Endothelial cell of umbilical vein (primary cell): ENCODE measurements at regions of chr13 and their contacts with region 1.

Region 1: DNA sequence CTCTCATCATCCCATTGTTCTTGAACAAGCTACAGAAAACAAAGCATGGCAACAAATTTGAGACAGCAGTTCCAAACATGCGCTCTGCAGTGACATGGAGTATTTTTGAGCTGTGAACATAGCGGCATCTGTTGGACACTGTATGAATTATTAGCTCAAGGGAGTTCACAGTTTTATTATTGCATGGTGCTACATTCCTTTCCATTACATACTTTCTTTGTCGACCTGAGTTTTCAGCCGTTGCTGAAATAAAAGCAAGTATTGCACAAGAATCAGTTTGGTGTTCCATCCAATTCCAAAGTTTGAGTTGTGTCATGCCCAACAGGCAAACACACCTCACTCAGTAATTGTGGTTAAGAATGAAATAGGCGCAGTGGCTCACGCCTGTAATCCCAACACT is 30.1 kb upstream of the METTL21C start:
- DNase-seq: peak; percentile 76
- H3K4me3 ChIP-seq: no peak overlapping the region
- H3K27ac ChIP-seq: no peak overlapping the region
- H3K4me1 ChIP-seq: peaks cover 14% of the 10 kb centered on the region
- H3K27me3 ChIP-seq: no peaks in the 10 kb centered on the region
- CTCF ChIP-seq: peak; percentile 42
- POLR2A ChIP-seq: no peak

Region 2: DNA sequence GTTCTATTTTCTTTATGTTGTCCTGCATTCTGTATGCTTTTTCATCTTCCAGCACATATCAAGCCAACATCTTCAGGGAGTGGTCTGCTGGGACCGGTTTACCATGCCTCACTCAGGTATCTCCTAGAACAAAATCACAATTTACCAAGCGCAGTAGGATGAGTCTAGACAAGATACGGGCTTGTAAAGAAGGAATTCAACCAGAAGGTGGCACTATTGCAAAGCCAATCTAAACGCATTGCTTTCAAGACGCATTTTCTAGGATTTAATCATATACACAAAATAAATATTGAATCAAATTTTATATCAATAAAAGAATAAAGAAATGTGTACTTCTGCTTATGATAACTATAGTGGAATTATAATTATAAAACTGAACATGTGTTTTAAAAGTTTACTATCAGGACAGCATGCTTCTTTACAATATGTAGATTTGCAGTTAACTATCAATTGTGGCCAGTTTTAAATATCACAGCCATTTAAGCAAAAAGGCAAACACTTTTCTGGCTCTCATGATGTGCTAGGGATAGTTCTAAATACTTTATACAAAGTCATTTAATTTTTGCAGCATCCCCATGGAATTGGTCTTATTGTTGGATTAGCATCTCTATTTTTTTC is 144.3 kb before region 1 on chr13:
- CTCF ChIA-PET with region 1: interaction called, 64 read pairs
- POLR2A ChIA-PET with region 1: no interaction called
- dilution Hi-C with region 1: no loop called
- intact Hi-C with region 1: loop called (anchors 1 kb)
- DNase-seq: peak; percentile 74
- H3K4me3 ChIP-seq: no peak overlapping the region
- H3K27ac ChIP-seq: no peak overlapping the region
- H3K4me1 ChIP-seq: no peaks in the 10 kb centered on the region
- H3K27me3 ChIP-seq: peaks cover 20 to 22% of the 10 kb centered on the region in 2 experiments
- CTCF ChIP-seq: peak; percentile 49
- POLR2A ChIP-seq: no peak

Region 3: GRCh38 chr13:102642475-102642874 is 82.4 kb before region 1 on chr13:
- CTCF ChIA-PET with region 1: interaction called, 36 read pairs
- POLR2A ChIA-PET with region 1: no interaction called
- dilution Hi-C with region 1: no loop called
- intact Hi-C with region 1: loop called (anchors 5 kb)
- DNase-seq: no peak
- H3K4me3 ChIP-seq: no peak overlapping the region
- H3K27ac ChIP-seq: no peak overlapping the region
- H3K4me1 ChIP-seq: peaks cover 16% of the 10 kb centered on the region
- H3K27me3 ChIP-seq: no peaks in the 10 kb centered on the region
- CTCF ChIP-seq: no peak
- POLR2A ChIP-seq: no peak

Region 4: DNA sequence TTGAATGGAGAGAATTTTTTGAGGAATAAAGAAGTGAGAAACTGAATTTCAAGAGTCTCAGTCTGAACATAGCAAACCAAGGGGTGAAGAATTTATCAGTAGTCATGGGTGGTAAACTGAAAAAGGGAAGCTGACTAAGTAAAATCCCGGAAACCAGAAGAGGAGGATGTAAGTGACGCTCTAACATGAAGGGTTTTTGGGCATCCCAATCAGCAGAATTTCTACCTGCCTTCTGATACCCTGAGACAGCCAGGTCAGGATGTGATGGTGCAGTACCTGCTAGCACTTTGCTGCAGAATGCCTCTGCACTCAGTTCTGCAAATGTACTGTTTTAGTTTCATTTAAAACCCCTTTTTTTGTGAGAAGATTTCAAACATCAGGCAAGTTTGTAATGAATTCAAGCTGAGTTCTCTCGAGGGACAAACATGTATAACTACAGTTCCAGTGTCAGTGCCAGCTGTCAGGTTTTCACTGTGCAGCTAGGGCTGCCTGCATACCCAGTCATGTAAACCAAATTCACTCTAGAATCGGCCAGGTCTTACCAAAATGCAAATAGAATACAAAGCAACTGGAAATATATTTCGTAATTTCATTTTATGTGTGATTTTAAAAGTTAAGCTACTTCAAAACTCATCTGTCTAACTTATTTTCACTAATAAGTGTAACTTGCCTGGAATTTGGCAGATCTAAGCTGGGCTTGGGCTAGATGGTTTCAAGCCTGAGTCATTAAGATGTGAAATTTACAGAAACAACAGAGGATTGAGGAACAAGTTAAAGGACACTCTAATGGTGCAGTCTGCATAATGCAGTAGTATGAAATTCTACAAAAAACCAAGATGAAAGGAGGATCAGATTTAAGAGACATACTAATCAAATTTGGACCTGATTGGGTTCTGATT is 43.8 kb before region 1 on chr13:
- CTCF ChIA-PET with region 1: interaction called, 25 read pairs
- POLR2A ChIA-PET with region 1: no interaction called
- dilution Hi-C with region 1: no loop called
- intact Hi-C with region 1: no loop called
- DNase-seq: no peak
- H3K4me3 ChIP-seq: no peak overlapping the region
- H3K27ac ChIP-seq: no peak overlapping the region
- H3K4me1 ChIP-seq: no peaks in the 10 kb centered on the region
- H3K27me3 ChIP-seq: no peaks in the 10 kb centered on the region
- CTCF ChIP-seq: no peak
- POLR2A ChIP-seq: no peak

Region 5: GRCh38 chr13:102693781-102694180 is 31.1 kb before region 1 on chr13:
- CTCF ChIA-PET with region 1: interaction called, 13 read pairs
- POLR2A ChIA-PET with region 1: no interaction called
- dilution Hi-C with region 1: no loop called
- intact Hi-C with region 1: no loop called
- DNase-seq: peak; percentile 25
- H3K4me3 ChIP-seq: no peak overlapping the region
- H3K27ac ChIP-seq: no peak overlapping the region
- H3K4me1 ChIP-seq: no peaks in the 10 kb centered on the region
- H3K27me3 ChIP-seq: peaks cover 7 to 9% of the 10 kb centered on the region in 2 experiments
- CTCF ChIP-seq: no peak
- POLR2A ChIP-seq: no peak

Region 6: DNA sequence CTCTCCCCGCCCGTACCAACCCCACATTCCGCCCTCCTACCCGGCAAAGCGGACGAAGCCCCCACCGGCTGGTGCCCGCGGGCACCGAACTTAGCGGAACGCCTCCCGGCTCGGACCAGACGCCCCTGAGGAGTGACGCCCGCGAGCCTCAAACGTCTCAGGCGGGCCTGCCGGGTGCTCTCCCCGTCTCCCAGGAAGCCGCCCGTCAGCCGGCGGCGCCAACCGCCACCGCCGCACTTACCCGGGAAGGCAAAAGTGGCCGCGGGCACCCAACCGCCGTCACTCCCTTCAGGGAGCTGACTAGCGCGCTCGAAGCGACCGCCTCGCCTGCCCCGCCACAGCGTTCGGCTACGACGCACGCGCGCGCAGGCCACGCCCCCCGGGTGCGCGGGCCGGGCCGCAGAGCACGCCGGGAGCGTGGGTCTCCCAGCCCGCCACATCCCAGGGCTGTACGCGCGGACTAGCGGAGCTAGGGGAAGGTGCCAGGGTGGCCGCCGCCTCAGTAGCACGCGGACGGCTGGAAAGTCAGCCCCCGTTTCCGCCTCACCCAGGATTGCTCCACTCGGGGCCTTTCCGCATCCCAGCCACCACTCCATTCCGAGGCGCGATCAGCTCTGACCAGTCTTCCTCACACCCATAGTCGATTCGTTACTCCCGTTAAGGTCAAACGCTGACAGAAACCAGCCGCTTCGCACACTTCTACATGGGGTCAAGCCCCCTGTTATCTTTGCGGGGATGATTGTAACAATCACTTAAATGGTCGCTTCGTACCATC is 48.7 kb after region 1 on chr13 and contains the start of gene TEX30:
- CTCF ChIA-PET with region 1: interaction called, 12 read pairs
- POLR2A ChIA-PET with region 1: no interaction called
- dilution Hi-C with region 1: no loop called
- intact Hi-C with region 1: loop called (anchors 1 kb)
- DNase-seq: peak; percentile 90
- H3K4me3 ChIP-seq: peak within 1 kb of the TSS; percentile 85 to 94 (median 88)
- H3K27ac ChIP-seq: peak within 1 kb of the TSS; percentile 76
- H3K4me1 ChIP-seq: peaks cover 18% of the 10 kb centered on the region
- H3K27me3 ChIP-seq: no peaks in the 10 kb centered on the region
- CTCF ChIP-seq: peak in 1 of 2 donors; percentile 10
- POLR2A ChIP-seq: peak; percentile 97
- total RNA-seq, gene TEX30: 14.5 and 19.8 TPM in 2 replicates

Region 7: DNA sequence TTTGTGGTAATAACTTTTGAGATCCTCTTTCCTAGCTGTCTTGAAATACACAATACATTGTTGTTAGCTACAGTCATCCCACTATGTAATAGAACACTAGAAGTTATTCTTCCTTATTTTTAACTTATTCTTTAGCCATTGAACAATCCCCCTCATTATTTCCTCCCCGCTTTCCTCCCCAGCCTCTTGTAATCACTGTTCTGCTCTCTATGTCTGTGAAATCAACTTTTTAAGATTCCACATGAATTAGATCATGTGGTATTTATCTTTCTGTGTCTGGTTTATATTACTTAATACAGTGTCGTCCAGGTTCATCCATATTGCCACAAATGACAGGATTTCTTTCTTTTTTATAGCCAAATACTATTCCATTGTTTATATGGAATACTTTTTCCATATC is 268.4 kb after region 1 on chr13:
- CTCF ChIA-PET with region 1: no interaction called
- POLR2A ChIA-PET with region 1: no interaction called
- dilution Hi-C with region 1: no loop called
- intact Hi-C with region 1: no loop called
- DNase-seq: no peak
- H3K4me3 ChIP-seq: no peak overlapping the region
- H3K27ac ChIP-seq: no peak overlapping the region
- H3K4me1 ChIP-seq: no peaks in the 10 kb centered on the region
- H3K27me3 ChIP-seq: no peaks in the 10 kb centered on the region
- CTCF ChIP-seq: no peak
- POLR2A ChIP-seq: no peak